IMR-90 (cell line): ENCODE measurements at regions of chr3 and their contacts with region 1.

Region 1: DNA sequence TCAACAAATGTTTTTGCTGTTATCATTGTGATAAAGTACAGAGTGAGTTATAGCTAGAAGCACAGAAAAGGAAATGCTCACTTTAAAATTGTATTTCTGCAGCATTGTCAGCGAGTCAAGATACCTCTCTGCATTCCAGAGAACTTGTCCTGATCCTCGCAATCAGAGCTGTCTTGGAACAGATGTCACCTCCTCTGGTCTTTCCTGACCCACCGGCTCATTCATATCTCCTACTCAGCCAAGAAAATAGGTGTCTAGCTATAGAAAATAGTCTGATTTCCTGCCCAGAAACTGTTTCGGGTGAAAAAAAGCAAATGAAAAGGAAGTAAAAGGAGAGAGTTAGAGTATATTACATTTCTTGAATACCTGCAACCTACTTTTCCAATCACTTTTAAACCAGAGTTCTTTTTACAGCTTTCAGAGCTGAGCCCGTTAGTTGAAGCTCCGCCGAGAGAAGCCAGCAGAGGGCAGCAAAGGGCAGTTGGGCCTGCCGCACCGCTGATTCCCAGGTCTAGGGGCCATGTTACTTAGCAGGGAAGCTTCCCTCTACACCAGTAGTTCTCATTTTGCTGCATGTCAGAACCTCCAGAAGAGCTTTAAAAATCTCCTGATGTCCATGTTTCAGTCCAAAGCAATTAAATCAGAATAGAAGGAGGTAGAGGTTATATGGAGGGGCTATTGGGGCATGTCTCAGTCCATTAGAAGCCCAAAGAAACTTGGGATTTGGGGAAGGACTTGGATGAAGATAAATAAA is 185.7 kb upstream of the THRB start:
- DNase-seq: no peak
- ATAC-seq: no peak
- H3K4me3 ChIP-seq: no peak overlapping the region
- H3K27ac ChIP-seq: no peak overlapping the region
- H3K4me1 ChIP-seq: peaks cover 2% of the 10 kb centered on the region; the same call in 1 of the 2 replicates
- H3K27me3 ChIP-seq: peaks cover 3% of the 10 kb centered on the region; the same call in 1 of the 2 replicates
- CTCF ChIP-seq: peak; percentile 49
- POLR2A ChIP-seq: no peak
- RAD21 ChIP-seq: peak; percentile 30

Region 2: DNA sequence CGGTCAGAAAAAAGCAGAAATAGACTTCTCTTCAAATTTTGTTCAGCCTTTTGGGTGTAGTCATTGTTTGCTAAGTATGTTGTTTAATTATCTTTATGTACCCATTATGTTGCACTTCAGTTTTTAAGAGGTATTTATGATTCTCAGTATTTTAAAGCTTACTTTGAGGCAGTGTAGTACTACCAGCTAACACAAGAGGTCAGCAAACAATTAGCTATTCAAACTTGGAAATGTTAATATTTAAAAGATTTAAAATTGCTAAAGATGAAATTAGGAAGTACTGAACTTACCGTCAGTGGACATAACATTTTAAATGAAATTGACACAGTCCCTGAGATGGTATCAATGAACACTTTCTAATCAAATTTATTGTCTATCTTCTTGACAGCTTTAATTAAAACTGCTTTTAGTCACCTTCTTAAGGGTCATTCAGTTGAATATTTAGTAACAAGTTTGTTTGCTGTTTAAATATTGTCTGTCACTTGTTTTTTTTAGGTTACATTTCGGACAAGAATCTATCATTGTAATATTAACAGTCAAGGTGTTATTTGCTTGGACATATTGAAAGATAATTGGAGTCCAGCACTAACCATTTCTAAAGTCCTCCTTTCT is 791.7 kb before region 1 on chr3:
- CTCF ChIA-PET with region 1: interaction called, 3 read pairs
- POLR2A ChIA-PET with region 1: no interaction called
- dilution Hi-C with region 1: no loop called
- in situ Hi-C with region 1: loop called (anchors 25 kb)
- intact Hi-C with region 1: no loop called
- DNase-seq: peak; percentile 64
- ATAC-seq: peak; percentile 74
- H3K4me3 ChIP-seq: no peak overlapping the region
- H3K27ac ChIP-seq: no peak overlapping the region
- H3K4me1 ChIP-seq: no peaks in the 10 kb centered on the region
- H3K27me3 ChIP-seq: no peaks in the 10 kb centered on the region
- CTCF ChIP-seq: peak; percentile 77
- POLR2A ChIP-seq: no peak
- RAD21 ChIP-seq: peak; percentile 83

Region 3: DNA sequence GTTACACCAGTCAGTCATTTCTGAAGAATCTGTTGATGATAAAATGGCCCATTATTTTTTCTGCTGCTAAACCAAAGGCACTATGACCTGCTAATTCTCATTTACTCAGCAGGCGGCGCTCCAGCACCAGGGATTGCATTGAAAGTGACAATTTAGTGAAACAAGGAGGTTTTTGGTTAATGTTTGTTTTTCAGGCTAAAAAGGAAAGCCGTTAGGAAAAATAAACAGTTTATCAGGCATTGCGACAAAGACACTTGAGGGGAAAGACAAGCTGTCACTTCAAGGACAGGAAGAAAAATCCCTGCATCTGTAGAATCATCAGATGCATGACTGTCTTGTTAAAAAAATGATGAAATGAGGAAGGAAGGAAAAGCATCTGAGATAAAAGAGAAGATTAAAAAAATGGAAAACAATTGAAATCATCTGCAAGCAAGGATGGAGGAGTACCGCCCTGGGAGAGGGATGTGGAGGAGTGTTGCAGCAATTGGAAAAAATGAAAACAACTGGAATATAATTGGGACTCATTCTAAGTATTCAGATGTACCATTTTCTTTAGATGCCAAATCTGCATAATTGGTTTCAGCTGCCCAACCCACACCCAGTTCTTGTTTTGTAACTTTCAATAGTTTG is 681.3 kb before region 1 on chr3:
- CTCF ChIA-PET with region 1: interaction called, 4 read pairs
- POLR2A ChIA-PET with region 1: no interaction called
- dilution Hi-C with region 1: no loop called
- in situ Hi-C with region 1: loop called (anchors 10 kb)
- intact Hi-C with region 1: loop called (anchors 1 kb)
- DNase-seq: peak; percentile 42
- ATAC-seq: peak; percentile 57; the same call in 1 of the 2 replicates
- H3K4me3 ChIP-seq: no peak overlapping the region
- H3K27ac ChIP-seq: no peak overlapping the region
- H3K4me1 ChIP-seq: peaks cover 7% of the 10 kb centered on the region; the same call in 1 of the 2 replicates
- H3K27me3 ChIP-seq: no peaks in the 10 kb centered on the region; the same call in none of the 2 replicates
- CTCF ChIP-seq: peak; percentile 98
- POLR2A ChIP-seq: peak; percentile 50
- RAD21 ChIP-seq: peak; percentile 100

Region 4: GRCh38 chr3:24185738-24186384 is 494.5 kb before region 1 on chr3:
- CTCF ChIA-PET with region 1: interaction called, 7 read pairs
- POLR2A ChIA-PET with region 1: no interaction called
- dilution Hi-C with region 1: no loop called
- in situ Hi-C with region 1: no loop called
- intact Hi-C with region 1: loop called (anchors 1 kb)
- DNase-seq: peak; percentile 57
- ATAC-seq: peak; percentile 81
- H3K4me3 ChIP-seq: no peak overlapping the region
- H3K27ac ChIP-seq: no peak overlapping the region
- H3K4me1 ChIP-seq: no peaks in the 10 kb centered on the region
- H3K27me3 ChIP-seq: peaks cover 5% of the 10 kb centered on the region
- CTCF ChIP-seq: peak; percentile 53
- POLR2A ChIP-seq: no peak
- RAD21 ChIP-seq: peak; percentile 51

Region 5: DNA sequence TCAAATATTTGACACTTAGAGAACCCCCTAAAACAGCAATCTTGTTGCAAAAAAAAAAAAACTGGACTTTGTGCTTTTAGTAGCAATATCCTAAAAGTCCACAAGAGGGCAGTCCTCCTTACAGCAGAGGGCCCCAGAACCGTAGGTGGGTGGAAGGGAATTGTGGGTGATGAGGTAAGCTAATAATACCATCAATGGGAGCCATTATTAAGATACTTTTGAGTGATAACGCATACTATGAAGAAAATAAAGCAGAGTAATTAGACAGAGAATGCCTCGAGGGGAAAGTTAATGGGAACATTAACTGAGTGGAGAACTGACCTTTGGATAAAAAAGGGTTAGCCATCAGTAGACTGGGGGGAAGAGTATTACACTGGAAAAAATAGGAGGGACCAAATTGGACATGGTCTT is 415.6 kb before region 1 on chr3:
- CTCF ChIA-PET with region 1: interaction called, 3 read pairs
- POLR2A ChIA-PET with region 1: no interaction called
- dilution Hi-C with region 1: no loop called
- in situ Hi-C with region 1: no loop called
- intact Hi-C with region 1: loop called (anchors 1 kb)
- DNase-seq: peak; percentile 32
- ATAC-seq: peak; percentile 63
- H3K4me3 ChIP-seq: no peak overlapping the region
- H3K27ac ChIP-seq: no peak overlapping the region
- H3K4me1 ChIP-seq: no peaks in the 10 kb centered on the region
- H3K27me3 ChIP-seq: peaks cover 20% of the 10 kb centered on the region
- CTCF ChIP-seq: peak; percentile 65
- POLR2A ChIP-seq: no peak
- RAD21 ChIP-seq: peak; percentile 59

Region 6: DNA sequence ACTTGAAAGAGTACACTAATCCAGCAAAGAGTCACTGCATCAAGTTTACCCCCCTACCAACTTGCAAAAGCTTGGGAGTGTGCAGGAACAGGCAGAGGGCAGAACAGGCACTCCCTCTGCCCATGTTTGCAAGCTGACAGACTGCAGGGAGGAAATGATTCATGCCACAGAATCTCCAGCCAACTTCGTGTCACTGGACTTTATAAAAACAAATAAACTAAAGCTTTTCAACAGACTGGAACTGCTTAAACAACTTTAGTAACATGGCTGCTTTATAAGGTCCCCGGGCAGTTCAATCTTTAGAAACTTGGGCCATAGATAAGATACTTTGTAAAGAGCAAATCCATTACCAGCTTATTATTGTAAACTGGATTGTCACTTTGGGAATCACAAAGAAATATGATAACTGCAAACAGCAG is 315.2 kb before region 1 on chr3:
- CTCF ChIA-PET with region 1: no interaction called
- POLR2A ChIA-PET with region 1: no interaction called
- dilution Hi-C with region 1: no loop called
- in situ Hi-C with region 1: no loop called
- intact Hi-C with region 1: no loop called
- DNase-seq: peak; percentile 68
- ATAC-seq: peak; percentile 91
- H3K4me3 ChIP-seq: no peak overlapping the region
- H3K27ac ChIP-seq: no peak overlapping the region
- H3K4me1 ChIP-seq: no peaks in the 10 kb centered on the region; the same call in 1 of the 2 replicates
- H3K27me3 ChIP-seq: no peaks in the 10 kb centered on the region
- CTCF ChIP-seq: no peak
- POLR2A ChIP-seq: no peak
- RAD21 ChIP-seq: no peak

Region 7: GRCh38 chr3:24867783-24868182 is 187.4 kb after region 1 on chr3:
- CTCF ChIA-PET with region 1: no interaction called
- POLR2A ChIA-PET with region 1: no interaction called
- dilution Hi-C with region 1: no loop called
- in situ Hi-C with region 1: no loop called
- intact Hi-C with region 1: no loop called
- DNase-seq: no peak
- ATAC-seq: no peak
- H3K4me3 ChIP-seq: no peak overlapping the region
- H3K27ac ChIP-seq: no peak overlapping the region
- H3K4me1 ChIP-seq: no peaks in the 10 kb centered on the region
- H3K27me3 ChIP-seq: no peaks in the 10 kb centered on the region
- CTCF ChIP-seq: no peak
- POLR2A ChIP-seq: no peak
- RAD21 ChIP-seq: no peak